SK-N-SH (cell line): ENCODE measurements at regions of chr7 and their contacts with region 1.

Region 1: DNA sequence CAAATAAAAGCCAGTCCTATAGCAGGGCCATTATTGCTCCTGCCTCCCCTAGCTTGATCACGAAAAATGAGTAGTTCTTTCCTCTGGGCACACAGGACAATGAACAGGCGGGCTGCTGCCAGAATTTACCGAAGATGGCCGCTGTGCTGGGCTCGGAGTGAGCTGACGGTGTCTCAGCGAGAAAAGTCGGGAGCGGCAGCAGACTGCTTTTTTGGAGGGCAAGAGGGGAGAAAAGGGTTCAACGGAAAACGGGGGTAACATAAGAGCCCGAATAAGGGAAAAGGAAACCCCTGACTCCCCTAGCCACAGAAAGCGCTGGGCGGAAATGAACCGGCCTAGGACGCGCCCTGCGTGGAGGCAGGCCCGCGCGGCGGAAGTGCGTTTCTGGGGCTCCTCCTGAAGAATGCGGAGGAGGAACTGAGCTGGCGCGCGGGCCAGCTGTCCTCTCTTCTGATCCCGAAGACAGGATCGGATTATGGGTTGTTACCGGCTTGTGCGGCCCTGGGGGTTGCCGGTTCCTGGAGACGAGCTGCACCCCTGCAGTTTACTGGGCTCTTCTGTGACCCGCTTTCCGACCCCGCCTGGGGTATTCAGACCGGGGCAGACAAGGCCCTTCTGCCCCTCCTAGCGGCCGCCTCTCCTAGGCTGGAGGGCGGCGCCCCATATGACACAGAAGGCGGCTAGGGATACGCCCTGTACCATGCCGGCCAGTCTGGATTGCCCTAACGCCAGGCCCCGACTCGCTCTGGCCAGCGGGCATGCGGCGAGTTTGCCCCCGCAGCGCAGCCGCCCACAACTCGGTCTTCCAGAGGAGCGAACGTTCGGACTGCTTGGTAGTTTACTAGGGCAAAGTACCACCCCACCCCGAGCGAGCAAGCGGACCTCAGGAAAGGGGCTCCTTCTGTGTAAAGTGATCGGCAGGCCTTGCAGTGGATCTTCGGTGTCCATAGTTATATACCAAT is 30.1 kb upstream of the KMT2E start:
- DNase-seq: peak; percentile 95
- H3K4me3 ChIP-seq: peak overlapping the region; percentile 67 to 93
- H3K27ac ChIP-seq: peak overlapping the region; percentile 98 to 100
- H3K4me1 ChIP-seq: peaks cover 47 to 50% of the 10 kb centered on the region in 2 experiments
- H3K27me3 ChIP-seq: no peaks in the 10 kb centered on the region
- CTCF ChIP-seq: peak; percentile 56
- EP300 ChIP-seq: peak in 1 of 2 experiments; percentile 55; a peak in 1 of 4 replicates
- RAD21 ChIP-seq: peak; percentile 32

Region 2: GRCh38 chr7:104895522-104896236 is 88.2 kb before region 1 on chr7:
- CTCF ChIA-PET with region 1: no interaction called
- POLR2A ChIA-PET with region 1: no interaction called
- DNase-seq: no peak
- H3K4me3 ChIP-seq: no peak overlapping the region
- H3K27ac ChIP-seq: no peak overlapping the region
- H3K4me1 ChIP-seq: peaks cover 0 to 2% of the 10 kb centered on the region in 2 experiments; a peak in 2 of 4 replicates
- H3K27me3 ChIP-seq: peaks cover 41% of the 10 kb centered on the region
- CTCF ChIP-seq: no peak
- EP300 ChIP-seq: 0 out of 4 replicates have a peak, but pooled peaks of 1 of the 2 experiments have one; percentile 1
- RAD21 ChIP-seq: no peak

Region 3: DNA sequence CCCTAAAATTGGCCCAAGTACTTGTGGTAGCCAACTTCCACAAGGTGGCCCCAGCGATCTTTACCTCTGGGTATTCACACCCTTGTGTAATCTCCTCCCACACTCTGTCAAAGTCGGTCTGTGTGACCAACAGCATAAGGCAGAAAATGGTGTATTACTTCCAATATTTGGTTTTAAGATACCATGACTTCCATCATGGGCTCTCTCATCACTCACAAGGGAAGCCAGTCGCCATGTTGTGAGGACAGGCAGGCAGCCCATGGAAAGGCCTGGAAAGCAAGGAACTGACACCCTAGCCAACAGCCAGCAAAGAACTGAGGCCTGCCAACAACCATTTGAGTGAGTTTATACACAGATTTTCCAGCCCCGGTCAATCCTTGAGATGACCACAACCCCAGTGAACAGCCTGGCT is 60.8 kb before region 1 on chr7:
- CTCF ChIA-PET with region 1: interaction called, 13 read pairs
- POLR2A ChIA-PET with region 1: no interaction called
- DNase-seq: peak; percentile 74
- H3K4me3 ChIP-seq: no peak overlapping the region; a peak in 1 of 4 replicates
- H3K27ac ChIP-seq: no peak overlapping the region; a peak in 1 of 4 replicates
- H3K4me1 ChIP-seq: no peaks in the 10 kb centered on the region; a peak in 2 of 4 replicates
- H3K27me3 ChIP-seq: no peaks in the 10 kb centered on the region; the same call in 1 of the 2 replicates
- CTCF ChIP-seq: peak; percentile 92
- EP300 ChIP-seq: 0 out of 4 replicates have a peak, but pooled peaks of 1 of the 2 experiments have one; percentile 12
- RAD21 ChIP-seq: peak; percentile 99

Region 4: GRCh38 chr7:105006437-105007133 is 22.7 kb after region 1 on chr7:
- CTCF ChIA-PET with region 1: interaction called, 21 read pairs
- POLR2A ChIA-PET with region 1: interaction called, 10 read pairs
- DNase-seq: no peak
- H3K4me3 ChIP-seq: no peak overlapping the region
- H3K27ac ChIP-seq: peak overlapping the region; percentile 1 to 5; a peak in 1 of 4 replicates
- H3K4me1 ChIP-seq: peaks cover 34 to 47% of the 10 kb centered on the region in 2 experiments
- H3K27me3 ChIP-seq: no peaks in the 10 kb centered on the region
- CTCF ChIP-seq: peak; percentile 25; the same call in 1 of the 2 replicates
- EP300 ChIP-seq: no peak
- RAD21 ChIP-seq: no peak

Region 5: GRCh38 chr7:105046414-105046813 is 62.6 kb after region 1 on chr7:
- CTCF ChIA-PET with region 1: interaction called, 21 read pairs
- POLR2A ChIA-PET with region 1: no interaction called
- DNase-seq: no peak
- H3K4me3 ChIP-seq: no peak overlapping the region
- H3K27ac ChIP-seq: peak overlapping the region; percentile 23 to 48; a peak in 3 of 4 replicates
- H3K4me1 ChIP-seq: peaks cover 0 to 14% of the 10 kb centered on the region in 2 experiments; a peak in 2 of 4 replicates
- H3K27me3 ChIP-seq: no peaks in the 10 kb centered on the region
- CTCF ChIP-seq: no peak
- EP300 ChIP-seq: peak in 1 of 2 experiments; percentile 61; a peak in 1 of 4 replicates
- RAD21 ChIP-seq: no peak

Region 6: GRCh38 chr7:105429746-105430612 is 446.1 kb after region 1 on chr7:
- CTCF ChIA-PET with region 1: interaction called, 14 read pairs
- POLR2A ChIA-PET with region 1: interaction called, 4 read pairs
- DNase-seq: peak; percentile 55
- H3K4me3 ChIP-seq: no peak overlapping the region
- H3K27ac ChIP-seq: no peak overlapping the region; a peak in 1 of 4 replicates
- H3K4me1 ChIP-seq: no peaks in the 10 kb centered on the region
- H3K27me3 ChIP-seq: no peaks in the 10 kb centered on the region
- CTCF ChIP-seq: peak; percentile 72
- EP300 ChIP-seq: no peak
- RAD21 ChIP-seq: peak; percentile 74